AG04450 (cell line): ENCODE measurements at regions of chr10 and their contacts with region 1.

Region 1: DNA sequence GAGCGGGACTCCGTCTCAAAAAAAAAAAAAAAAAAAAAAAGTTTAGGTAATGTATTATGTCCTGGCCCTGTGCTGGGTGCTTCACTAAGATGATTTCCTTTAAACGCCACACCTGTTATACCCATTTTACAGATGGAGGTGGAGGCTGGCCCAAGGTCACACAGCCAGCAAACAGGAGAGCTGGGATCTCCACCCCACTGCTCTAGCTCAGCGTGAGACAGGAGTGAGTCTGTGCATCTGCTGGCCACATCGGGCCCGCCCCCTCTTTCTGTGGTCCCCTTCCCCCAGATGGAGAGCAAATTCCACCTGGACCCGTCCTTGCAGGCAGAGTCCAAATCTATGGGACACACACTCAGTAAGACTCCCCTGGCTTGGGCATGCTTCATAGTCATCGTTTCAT is 51.0 kb downstream of the LHPP start:
- DNase-seq: no peak
- H3K4me3 ChIP-seq: no peak overlapping the region
- H3K27ac ChIP-seq: no peak overlapping the region
- H3K27me3 ChIP-seq: peaks cover 3% of the 10 kb centered on the region
- CTCF ChIP-seq: no peak

Region 2: DNA sequence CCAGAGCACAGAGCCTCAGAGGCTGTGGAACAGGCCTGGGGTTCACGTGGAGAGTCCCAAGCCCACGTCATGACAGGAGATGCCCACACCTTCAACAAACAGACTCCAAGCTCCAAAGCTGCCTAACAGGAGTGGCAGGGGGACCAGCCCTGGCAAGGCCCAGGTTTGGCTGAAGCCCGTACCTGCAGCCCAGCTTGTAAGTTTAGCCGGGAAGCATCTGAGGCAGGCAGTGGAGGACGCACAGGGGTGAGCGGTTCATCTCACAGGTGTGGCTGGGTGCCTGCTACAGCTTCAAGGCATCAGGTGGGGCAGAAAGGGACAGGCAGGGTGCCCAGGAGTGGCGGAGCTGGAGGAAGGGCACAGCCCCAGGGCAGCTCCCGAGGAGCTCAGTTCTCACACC is 17.4 kb before region 1 on chr10:
- CTCF ChIA-PET with region 1: no interaction called
- POLR2A ChIA-PET with region 1: interaction called, 10 read pairs
- DNase-seq: no peak
- H3K4me3 ChIP-seq: no peak overlapping the region
- H3K27ac ChIP-seq: no peak overlapping the region
- H3K27me3 ChIP-seq: no peaks in the 10 kb centered on the region
- CTCF ChIP-seq: no peak

Region 3: GRCh38 chr10:124657806-124658205 is 145.2 kb after region 1 on chr10:
- CTCF ChIA-PET with region 1: no interaction called
- POLR2A ChIA-PET with region 1: no interaction called
- DNase-seq: no peak
- H3K4me3 ChIP-seq: no peak overlapping the region
- H3K27ac ChIP-seq: no peak overlapping the region
- H3K27me3 ChIP-seq: no peaks in the 10 kb centered on the region
- CTCF ChIP-seq: no peak

Region 4: DNA sequence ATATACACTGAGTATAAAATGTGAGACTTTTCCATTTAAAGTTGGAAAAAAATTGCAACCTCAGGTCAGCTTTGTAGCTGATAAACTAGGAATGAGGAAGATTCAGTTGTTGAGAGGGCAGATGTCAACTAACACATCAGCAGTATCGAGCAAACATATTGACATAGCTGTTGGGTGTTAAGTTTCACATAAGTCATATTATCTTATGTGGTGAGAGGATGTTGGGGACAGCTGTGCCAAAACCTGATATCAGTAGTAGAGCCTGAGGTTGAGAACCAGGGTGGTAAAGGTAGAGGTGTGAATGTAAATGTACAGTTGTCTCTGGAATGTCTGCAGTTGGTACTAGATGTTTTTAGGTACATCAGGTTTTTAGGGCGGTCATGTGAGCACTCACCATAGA is 434.3 kb after region 1 on chr10:
- CTCF ChIA-PET with region 1: no interaction called
- POLR2A ChIA-PET with region 1: no interaction called
- DNase-seq: no peak
- H3K4me3 ChIP-seq: no peak overlapping the region
- H3K27ac ChIP-seq: no peak overlapping the region
- H3K27me3 ChIP-seq: no peaks in the 10 kb centered on the region
- CTCF ChIP-seq: no peak